Naive thymus-derived CD4-positive, alpha-beta T cell (primary cell): ENCODE measurements at regions of chr1 and their contacts with region 1.

Region 1: GRCh38 chr1:10378081-10378841 is 20.6 kb upstream of the PGD start:
- DNase-seq: no peak
- ATAC-seq: peak; percentile 83
- H3K4me3 ChIP-seq: no peak overlapping the region
- H3K4me3 Mint-ChIP-seq: no peak overlapping the region
- H3K27ac ChIP-seq: no peak overlapping the region
- H3K27ac Mint-ChIP-seq: peak overlapping the region in 1 of 9 donors; percentile 13
- H3K4me1 ChIP-seq: no peaks in the 10 kb centered on the region
- H3K4me1 Mint-ChIP-seq: peaks cover 0 to 5% (median 0%) of the 10 kb centered on the region in 7 donors
- H3K27me3 ChIP-seq: no peaks in the 10 kb centered on the region
- H3K27me3 Mint-ChIP-seq: no peaks in the 10 kb centered on the region

Region 2: DNA sequence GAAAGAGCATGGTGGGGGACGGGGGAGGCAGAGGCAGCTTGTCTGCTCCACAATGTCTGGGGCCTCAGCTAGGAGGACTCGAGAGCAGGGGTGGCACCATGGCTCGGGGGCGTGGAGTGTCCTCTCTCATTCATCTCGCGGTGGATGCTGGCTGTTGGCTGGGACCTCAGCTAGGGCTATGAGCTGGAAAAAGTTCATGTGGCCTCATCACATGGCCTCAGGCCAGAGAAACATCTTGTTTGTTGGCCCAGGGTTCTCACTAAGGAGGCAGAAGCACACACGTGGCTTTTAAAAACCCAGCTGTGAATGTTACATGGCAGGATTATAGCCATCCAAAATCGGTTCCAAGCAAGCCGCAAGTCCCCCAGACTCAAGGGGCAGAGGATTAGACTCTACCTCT is 45.8 kb after region 1 on chr1:
- CTCF ChIA-PET with region 1: interaction called, 10 read pairs
- POLR2A ChIA-PET with region 1: no interaction called
- intact Hi-C with region 1: loop called (anchors 1 kb)
- DNase-seq: no peak
- ATAC-seq: no peak
- H3K4me3 ChIP-seq: no peak overlapping the region
- H3K4me3 Mint-ChIP-seq: no peak overlapping the region
- H3K27ac ChIP-seq: no peak overlapping the region
- H3K27ac Mint-ChIP-seq: no peak overlapping the region
- H3K4me1 ChIP-seq: no peaks in the 10 kb centered on the region
- H3K4me1 Mint-ChIP-seq: peaks cover 0 to 8% (median 3%) of the 10 kb centered on the region in 7 donors
- H3K27me3 ChIP-seq: no peaks in the 10 kb centered on the region
- H3K27me3 Mint-ChIP-seq: no peaks in the 10 kb centered on the region

Region 3: GRCh38 chr1:10555614-10556429 is 177.6 kb after region 1 on chr1:
- CTCF ChIA-PET with region 1: no interaction called
- POLR2A ChIA-PET with region 1: no interaction called
- intact Hi-C with region 1: no loop called
- DNase-seq: no peak
- ATAC-seq: no peak
- H3K4me3 ChIP-seq: no peak overlapping the region
- H3K4me3 Mint-ChIP-seq: no peak overlapping the region
- H3K27ac ChIP-seq: no peak overlapping the region
- H3K27ac Mint-ChIP-seq: no peak overlapping the region
- H3K4me1 ChIP-seq: no peaks in the 10 kb centered on the region
- H3K4me1 Mint-ChIP-seq: peaks cover 0 to 27% (median 19%) of the 10 kb centered on the region in 7 donors
- H3K27me3 ChIP-seq: no peaks in the 10 kb centered on the region
- H3K27me3 Mint-ChIP-seq: no peaks in the 10 kb centered on the region